Endothelial cell of umbilical vein (primary cell): ENCODE measurements at regions of chr9 and their contacts with region 1.

Region 1: GRCh38 chr9:4382722-4383317 is 83.0 kb upstream of the GLIS3 start:
- DNase-seq: peak; percentile 49
- H3K4me3 ChIP-seq: no peak overlapping the region
- H3K27ac ChIP-seq: no peak overlapping the region
- H3K4me1 ChIP-seq: no peaks in the 10 kb centered on the region
- H3K27me3 ChIP-seq: no peaks in the 10 kb centered on the region
- CTCF ChIP-seq: peak; percentile 40
- POLR2A ChIP-seq: no peak

Region 2: DNA sequence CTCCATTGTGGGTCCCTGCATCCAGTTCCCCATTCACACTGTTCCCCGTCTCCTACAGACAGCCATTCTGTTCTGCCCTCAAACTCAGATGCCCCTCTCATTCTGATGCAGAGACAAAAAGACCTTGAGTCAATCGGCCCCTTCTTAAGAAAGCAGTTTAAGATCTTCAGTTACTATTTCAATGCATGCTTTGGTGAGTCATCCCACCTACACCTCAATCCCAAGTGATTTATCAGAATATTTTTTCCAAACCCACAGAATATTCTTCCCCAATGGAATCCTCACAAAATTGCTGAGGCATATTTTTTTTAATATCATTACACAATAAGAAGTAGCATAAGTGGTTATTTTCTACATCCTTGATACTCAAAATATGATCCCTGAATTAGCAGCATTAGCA is 15.1 kb after region 1 on chr9:
- CTCF ChIA-PET with region 1: interaction called, 4 read pairs
- POLR2A ChIA-PET with region 1: no interaction called
- dilution Hi-C with region 1: no loop called
- intact Hi-C with region 1: loop called (anchors 1 kb)
- DNase-seq: no peak
- H3K4me3 ChIP-seq: no peak overlapping the region
- H3K27ac ChIP-seq: no peak overlapping the region
- H3K4me1 ChIP-seq: no peaks in the 10 kb centered on the region
- H3K27me3 ChIP-seq: no peaks in the 10 kb centered on the region
- CTCF ChIP-seq: no peak
- POLR2A ChIP-seq: no peak

Region 3: DNA sequence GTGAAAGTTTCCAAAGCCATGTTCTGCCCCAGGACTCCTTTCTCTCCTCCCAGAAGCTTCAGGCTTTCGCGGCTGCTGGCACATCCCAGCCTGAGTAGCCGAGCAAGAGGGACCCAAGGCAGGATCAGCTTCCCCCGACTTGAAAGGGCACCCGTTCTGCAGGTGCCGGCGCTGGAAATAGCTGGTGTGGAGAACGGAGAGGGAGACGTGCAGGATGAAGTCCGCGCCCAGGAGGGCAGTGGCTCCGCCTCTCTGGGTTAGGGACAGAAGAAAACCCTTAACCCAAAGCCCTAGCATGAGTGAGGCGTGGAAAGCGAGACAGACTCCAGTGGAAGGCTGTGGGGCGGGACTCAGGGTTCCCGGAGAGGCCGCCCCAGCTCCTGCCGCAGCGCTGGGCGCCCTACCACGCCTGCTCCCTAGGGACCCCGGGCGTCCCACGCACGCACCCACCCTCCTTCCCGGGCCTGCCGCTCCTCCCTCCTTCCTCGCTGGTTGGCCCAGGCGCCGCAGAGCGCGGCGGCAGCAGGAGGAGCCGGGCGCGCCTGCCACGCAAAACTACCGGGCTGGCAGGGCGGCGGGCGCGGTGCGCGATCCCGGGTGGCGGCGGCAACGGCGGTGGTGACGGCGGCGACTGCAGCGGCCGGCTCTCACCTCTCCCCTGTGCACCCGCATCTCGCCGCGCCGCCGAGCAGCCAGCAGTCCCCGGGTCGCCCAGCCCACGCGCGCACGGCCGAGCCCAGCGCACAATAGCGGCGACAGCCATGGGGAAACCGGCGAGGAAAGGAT is 107.3 kb after region 1 on chr9 and contains the start of gene SLC1A1:
- CTCF ChIA-PET with region 1: no interaction called
- POLR2A ChIA-PET with region 1: no interaction called
- dilution Hi-C with region 1: no loop called
- intact Hi-C with region 1: loop called (anchors 5 kb)
- DNase-seq: peak; percentile 69
- H3K4me3 ChIP-seq: peak within 1 kb of the TSS; percentile 84 to 94 (median 90)
- H3K27ac ChIP-seq: peak within 1 kb of the TSS; percentile 16
- H3K4me1 ChIP-seq: peaks cover 35% of the 10 kb centered on the region
- H3K27me3 ChIP-seq: no peaks in the 10 kb centered on the region
- CTCF ChIP-seq: no peak
- POLR2A ChIP-seq: no peak
- total RNA-seq, gene SLC1A1: 6.5 and 8.3 TPM in 2 replicates

Region 4: DNA sequence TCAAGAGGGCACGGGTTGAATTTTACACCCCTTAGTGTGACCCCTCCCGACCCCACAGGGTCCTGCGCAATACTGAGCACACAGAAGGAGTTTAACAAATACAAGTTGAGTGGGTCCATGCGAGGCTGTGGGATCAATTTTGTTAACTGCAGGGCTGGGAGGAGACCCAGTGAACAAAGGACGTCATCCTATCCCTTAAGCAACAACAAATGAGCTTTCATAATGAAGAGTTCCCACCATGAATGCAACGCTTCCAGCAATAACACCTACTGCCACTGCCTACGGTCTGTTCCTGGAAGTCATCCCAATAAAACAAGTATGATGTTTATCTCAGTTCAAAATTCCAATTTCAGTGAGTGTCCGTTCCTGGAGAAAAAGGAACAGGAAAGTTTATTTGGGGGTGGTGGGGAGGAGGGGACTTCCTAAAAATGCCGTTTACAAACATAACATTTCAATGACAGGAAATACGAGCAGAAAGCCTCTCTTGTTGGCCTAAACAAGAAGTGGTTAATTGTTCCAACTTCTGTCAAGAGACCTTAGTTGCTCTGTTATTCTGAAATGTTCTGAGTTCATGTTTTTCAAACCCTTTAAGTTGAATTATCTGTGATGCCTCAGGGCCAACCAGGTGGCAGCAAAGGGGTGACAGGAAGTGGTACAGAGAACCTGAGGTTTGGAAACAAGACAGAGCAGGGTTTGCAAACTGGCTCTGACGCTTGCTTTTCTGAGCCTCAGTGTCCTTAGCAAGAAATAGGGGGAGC is 213.5 kb after region 1 on chr9:
- CTCF ChIA-PET with region 1: no interaction called
- POLR2A ChIA-PET with region 1: no interaction called
- dilution Hi-C with region 1: no loop called
- intact Hi-C with region 1: loop called (anchors 1 kb)
- DNase-seq: peak; percentile 89
- H3K4me3 ChIP-seq: peak overlapping the region in 1 of 3 experiments; percentile 11
- H3K27ac ChIP-seq: peak overlapping the region; percentile 58
- H3K4me1 ChIP-seq: peaks cover 17% of the 10 kb centered on the region
- H3K27me3 ChIP-seq: no peaks in the 10 kb centered on the region
- CTCF ChIP-seq: no peak
- POLR2A ChIP-seq: peak; percentile 19

Region 5: DNA sequence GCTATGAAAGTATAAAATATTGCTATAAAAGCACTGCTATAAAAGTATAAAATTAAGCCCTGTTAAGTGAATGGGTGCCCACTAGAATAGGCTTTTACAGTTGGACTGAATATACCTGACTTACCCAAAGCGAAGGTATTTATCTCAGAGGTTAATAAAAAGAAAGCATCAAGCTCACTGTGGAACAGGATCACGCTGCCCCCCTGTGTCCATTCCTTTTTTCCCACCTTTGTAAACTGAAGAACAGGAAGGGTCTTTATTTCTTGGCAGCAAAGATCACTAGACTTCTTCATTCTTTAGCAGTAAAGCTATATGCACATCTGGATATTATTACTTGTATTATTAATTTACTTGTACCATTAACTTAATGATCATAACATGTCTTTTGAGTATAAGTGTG is 257.2 kb after region 1 on chr9:
- CTCF ChIA-PET with region 1: interaction called, 114 read pairs
- POLR2A ChIA-PET with region 1: no interaction called
- dilution Hi-C with region 1: no loop called
- intact Hi-C with region 1: loop called (anchors 1 kb)
- DNase-seq: peak; percentile 64
- H3K4me3 ChIP-seq: no peak overlapping the region
- H3K27ac ChIP-seq: no peak overlapping the region
- H3K4me1 ChIP-seq: no peaks in the 10 kb centered on the region
- H3K27me3 ChIP-seq: no peaks in the 10 kb centered on the region
- CTCF ChIP-seq: peak; percentile 37 to 51
- POLR2A ChIP-seq: no peak

Region 6: GRCh38 chr9:4740638-4741364 is 358.0 kb after region 1 on chr9 and contains the start of gene AK3:
- CTCF ChIA-PET with region 1: interaction called, 6 read pairs
- POLR2A ChIA-PET with region 1: no interaction called
- dilution Hi-C with region 1: no loop called
- intact Hi-C with region 1: loop called (anchors 2 kb)
- DNase-seq: peak; percentile 85
- H3K4me3 ChIP-seq: peak within 1 kb of the TSS; percentile 69 to 94 (median 90)
- H3K27ac ChIP-seq: peak within 1 kb of the TSS; percentile 77
- H3K4me1 ChIP-seq: peaks cover 10% of the 10 kb centered on the region
- H3K27me3 ChIP-seq: no peaks in the 10 kb centered on the region
- CTCF ChIP-seq: peak; percentile 7 to 23
- POLR2A ChIP-seq: peak; percentile 88
- total RNA-seq, gene AK3: 38.1 and 42.3 TPM in 2 replicates

Region 7: DNA sequence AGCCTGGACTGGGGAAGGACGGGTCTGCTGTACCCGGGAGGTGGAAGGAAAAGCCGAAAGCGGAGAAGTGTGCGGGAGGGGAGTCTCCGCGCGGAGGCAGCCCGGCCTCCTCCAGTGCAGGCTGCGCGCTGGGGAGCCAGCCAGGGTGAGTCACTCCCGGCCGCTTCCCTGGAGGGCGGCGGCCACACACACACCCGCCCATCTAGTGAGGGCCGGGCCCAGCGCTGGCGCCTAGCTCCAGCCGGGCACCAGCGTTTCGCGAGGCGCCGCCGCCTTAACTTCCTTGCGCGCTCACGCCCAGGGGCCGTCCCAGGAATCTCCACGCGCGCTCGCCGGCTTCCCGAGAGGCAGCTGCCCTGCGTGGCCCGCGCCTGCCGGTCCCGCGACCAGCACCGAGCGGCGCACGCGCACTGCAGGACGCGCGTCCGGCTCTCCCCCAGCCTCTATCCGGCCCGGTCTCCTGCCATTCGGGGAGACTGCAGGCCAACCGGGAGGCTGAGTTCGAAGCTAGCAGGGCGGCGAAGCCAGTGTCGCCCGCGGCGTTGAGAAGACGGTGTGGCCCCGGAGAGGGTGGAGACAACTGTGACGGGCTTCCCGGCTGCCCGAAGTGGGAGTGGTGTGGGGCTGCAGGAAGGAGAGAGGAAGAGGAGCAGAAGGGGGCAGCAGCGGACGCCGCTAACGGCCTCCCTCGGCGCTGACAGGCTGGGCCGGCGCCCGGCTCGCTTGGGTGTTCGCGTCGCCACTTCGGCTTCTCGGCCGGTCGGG is 602.0 kb after region 1 on chr9 and contains the start of gene JAK2:
- CTCF ChIA-PET with region 1: interaction called, 3 read pairs
- POLR2A ChIA-PET with region 1: no interaction called
- dilution Hi-C with region 1: no loop called
- intact Hi-C with region 1: loop called (anchors 5 kb)
- DNase-seq: peak; percentile 96
- H3K4me3 ChIP-seq: peak within 1 kb of the TSS; percentile 63 to 86 (median 79)
- H3K27ac ChIP-seq: peak within 1 kb of the TSS; percentile 90
- H3K4me1 ChIP-seq: peaks cover 36% of the 10 kb centered on the region
- H3K27me3 ChIP-seq: no peaks in the 10 kb centered on the region
- CTCF ChIP-seq: peak; percentile 23 to 61
- POLR2A ChIP-seq: peak; percentile 76
- total RNA-seq, gene JAK2: 9.7 and 10.3 TPM in 2 replicates